ENCODE measurements at regions of chr6 and their contacts with region 1.

Region 1: GRCh38 chr6:101114703-101115102 is 233.6 kb upstream of the ASCC3 start:
- DNase-seq: peak; percentile 58
- ATAC-seq: peak; percentile 51
- H3K4me3 ChIP-seq: no peak overlapping the region
- H3K27ac ChIP-seq: no peak overlapping the region
- H3K4me1 ChIP-seq: peaks cover 53% of the 10 kb centered on the region
- H3K27me3 ChIP-seq: no peaks in the 10 kb centered on the region
- CTCF ChIP-seq: peak; percentile 66

Region 2: DNA sequence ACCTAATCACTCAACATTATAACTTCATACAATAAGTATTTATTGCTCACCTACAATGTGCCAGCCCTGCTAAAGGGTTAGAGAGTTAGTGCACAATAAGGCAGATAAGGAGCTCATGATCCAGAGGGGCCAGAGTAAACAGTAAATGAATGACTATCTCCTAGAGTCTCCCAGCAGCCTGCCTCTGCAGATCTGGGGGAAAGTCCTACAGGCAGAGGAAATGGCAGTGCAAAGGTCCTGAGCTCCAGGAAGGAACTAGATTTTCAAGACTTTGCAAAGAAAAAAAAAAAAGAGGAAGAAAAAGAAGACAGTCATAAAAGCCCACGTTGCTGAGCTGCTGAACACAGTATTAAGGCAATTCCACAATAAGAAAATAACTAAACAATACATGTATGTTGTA is 810.1 kb before region 1 on chr6:
- CTCF ChIA-PET with region 1: no interaction called
- POLR2A ChIA-PET with region 1: no interaction called
- intact Hi-C with region 1: no loop called
- DNase-seq: no peak
- ATAC-seq: no peak
- H3K4me3 ChIP-seq: no peak overlapping the region
- H3K27ac ChIP-seq: no peak overlapping the region
- H3K4me1 ChIP-seq: peaks cover 17% of the 10 kb centered on the region
- H3K27me3 ChIP-seq: no peaks in the 10 kb centered on the region
- CTCF ChIP-seq: no peak

Region 3: GRCh38 chr6:100803264-100804045 is 311.2 kb before region 1 on chr6:
- CTCF ChIA-PET with region 1: no interaction called
- POLR2A ChIA-PET with region 1: no interaction called
- intact Hi-C with region 1: loop called (anchors 5 kb)
- DNase-seq: peak; percentile 59
- ATAC-seq: peak; percentile 72
- H3K4me3 ChIP-seq: no peak overlapping the region
- H3K27ac ChIP-seq: peak overlapping the region; percentile 66
- H3K4me1 ChIP-seq: peaks cover 29% of the 10 kb centered on the region
- H3K27me3 ChIP-seq: no peaks in the 10 kb centered on the region
- CTCF ChIP-seq: no peak